Ovary (tissue), 10 donors: ENCODE measurements at regions of chr4 and their contacts with region 1.

Region 1: DNA sequence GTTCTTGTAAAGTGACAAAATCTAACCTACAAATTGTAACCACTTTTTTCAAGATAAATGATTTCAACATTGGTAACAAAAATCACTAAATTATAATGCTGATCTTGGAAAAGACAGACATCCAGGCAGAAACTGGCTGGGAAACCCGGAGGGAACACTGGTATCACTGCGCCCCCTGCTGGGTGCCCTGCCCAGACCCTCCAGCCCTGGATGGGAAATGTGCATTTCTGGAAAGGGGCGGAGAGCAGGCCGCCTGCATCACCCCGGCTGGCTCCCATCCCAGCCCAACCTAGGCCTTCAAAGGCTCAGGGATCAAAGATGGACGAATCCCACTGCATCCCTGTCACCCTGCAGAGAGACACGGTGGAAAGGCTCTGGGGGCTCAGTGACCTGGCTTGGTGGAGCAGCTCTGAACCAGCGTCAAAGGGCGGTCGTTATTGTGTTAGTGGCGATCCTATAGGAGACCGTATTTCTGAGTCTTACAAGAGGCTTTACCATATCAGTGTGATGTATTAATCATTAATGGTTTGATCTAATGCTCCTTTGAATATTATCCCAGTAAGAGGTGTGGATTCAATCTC is 37.3 kb downstream of the ACOX3 start:
- DNase-seq: peak; percentile 86 to 94 (median 92)
- H3K4me3 ChIP-seq: no peak overlapping the region
- H3K27ac ChIP-seq: no peak overlapping the region
- H3K4me1 ChIP-seq: no peaks in the 10 kb centered on the region
- H3K27me3 ChIP-seq: no peaks in the 10 kb centered on the region
- CTCF ChIP-seq: peak; percentile 85 to 97 (median 95)
- EP300 ChIP-seq: no peak
- POLR2A ChIP-seq: peak; percentile 24

Region 2: GRCh38 chr4:7903791-7904516 is 499.3 kb before region 1 on chr4:
- intact Hi-C with region 1: no loop called
- DNase-seq: no peak
- H3K4me3 ChIP-seq: no peak overlapping the region
- H3K27ac ChIP-seq: no peak overlapping the region
- H3K4me1 ChIP-seq: peaks cover 13% of the 10 kb centered on the region
- H3K27me3 ChIP-seq: no peaks in the 10 kb centered on the region
- CTCF ChIP-seq: no peak
- EP300 ChIP-seq: no peak
- POLR2A ChIP-seq: no peak

Region 3: GRCh38 chr4:8168232-8168631 is 235.0 kb before region 1 on chr4:
- intact Hi-C with region 1: loop called in 2 of 4 experiments (anchors 10 kb)
- DNase-seq: no peak
- H3K4me3 ChIP-seq: no peak overlapping the region
- H3K27ac ChIP-seq: no peak overlapping the region
- H3K4me1 ChIP-seq: no peaks in the 10 kb centered on the region
- H3K27me3 ChIP-seq: no peaks in the 10 kb centered on the region
- CTCF ChIP-seq: no peak
- EP300 ChIP-seq: no peak
- POLR2A ChIP-seq: no peak

Region 4: GRCh38 chr4:8176547-8177399 is 226.5 kb before region 1 on chr4:
- intact Hi-C with region 1: loop called in 1 of 4 experiments (anchors 10 kb)
- DNase-seq: peak in 1 of 5 donors; percentile 40
- H3K4me3 ChIP-seq: no peak overlapping the region
- H3K27ac ChIP-seq: no peak overlapping the region
- H3K4me1 ChIP-seq: no peaks in the 10 kb centered on the region
- H3K27me3 ChIP-seq: no peaks in the 10 kb centered on the region
- CTCF ChIP-seq: peak; percentile 44 to 60 (median 47)
- EP300 ChIP-seq: no peak
- POLR2A ChIP-seq: no peak

Region 5: GRCh38 chr4:8241895-8242696 is 161.2 kb before region 1 on chr4:
- intact Hi-C with region 1: loop called (anchors 2 kb)
- DNase-seq: peak; percentile 92 to 95 (median 93)
- H3K4me3 ChIP-seq: no peak overlapping the region
- H3K27ac ChIP-seq: peak overlapping the region in 1 of 2 donors; percentile 20
- H3K4me1 ChIP-seq: peaks cover 3% of the 10 kb centered on the region
- H3K27me3 ChIP-seq: no peaks in the 10 kb centered on the region
- CTCF ChIP-seq: peak; percentile 96 to 98 (median 97)
- EP300 ChIP-seq: no peak
- POLR2A ChIP-seq: no peak

Region 6: GRCh38 chr4:8274765-8275547 is 128.3 kb before region 1 on chr4:
- intact Hi-C with region 1: loop called (anchors 2 to 10 kb)
- DNase-seq: peak; percentile 94 to 97 (median 96)
- H3K4me3 ChIP-seq: no peak overlapping the region
- H3K27ac ChIP-seq: peak overlapping the region in 1 of 2 donors; percentile 72
- H3K4me1 ChIP-seq: peaks cover 50% of the 10 kb centered on the region
- H3K27me3 ChIP-seq: no peaks in the 10 kb centered on the region
- CTCF ChIP-seq: peak; percentile 30 to 71 (median 65)
- EP300 ChIP-seq: no peak
- POLR2A ChIP-seq: no peak

Region 7: DNA sequence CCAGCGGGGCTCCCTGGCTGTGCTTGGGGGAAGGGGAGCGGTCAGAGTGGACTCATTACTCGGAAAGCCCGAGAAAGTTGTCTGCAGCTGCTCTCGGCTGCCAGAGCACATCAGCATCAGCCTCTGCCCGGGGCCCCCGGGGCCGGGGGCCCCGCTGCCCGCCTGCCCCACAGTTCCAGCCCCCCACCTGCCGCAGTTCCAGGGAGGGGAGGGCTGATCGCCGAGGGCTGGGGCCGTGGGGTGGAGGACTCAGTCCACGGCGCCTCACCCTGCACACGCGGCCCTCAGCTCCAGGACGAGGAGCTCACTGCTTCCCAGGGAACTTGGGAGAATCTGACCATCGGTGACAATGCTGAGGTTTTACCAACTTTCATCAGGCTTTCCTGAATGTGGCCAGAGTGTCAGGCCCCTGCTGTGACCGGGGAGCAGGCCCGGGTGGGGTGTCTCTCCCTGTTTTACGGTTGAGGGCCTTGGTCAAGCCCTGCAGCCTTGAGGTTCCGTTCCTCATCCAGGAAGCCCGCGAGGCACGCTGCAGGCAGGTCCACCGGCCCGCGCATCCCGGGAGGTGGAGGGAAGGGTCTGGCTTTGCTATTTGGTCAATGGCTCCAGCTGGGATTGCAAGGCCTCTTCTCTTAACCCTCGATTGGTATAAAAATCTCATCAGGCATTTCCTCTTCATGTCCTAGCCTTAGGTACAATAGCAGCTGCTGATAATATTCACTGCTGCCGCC is 246.5 kb after region 1 on chr4:
- intact Hi-C with region 1: no loop called
- DNase-seq: peak in 3 of 5 donors; percentile 1 to 13 (median 3)
- H3K4me3 ChIP-seq: no peak overlapping the region
- H3K27ac ChIP-seq: no peak overlapping the region
- H3K4me1 ChIP-seq: no peaks in the 10 kb centered on the region
- H3K27me3 ChIP-seq: no peaks in the 10 kb centered on the region
- CTCF ChIP-seq: no peak
- EP300 ChIP-seq: no peak
- POLR2A ChIP-seq: no peak